ENCODE measurements at regions of chr11 and their contacts with region 1.

Region 1: DNA sequence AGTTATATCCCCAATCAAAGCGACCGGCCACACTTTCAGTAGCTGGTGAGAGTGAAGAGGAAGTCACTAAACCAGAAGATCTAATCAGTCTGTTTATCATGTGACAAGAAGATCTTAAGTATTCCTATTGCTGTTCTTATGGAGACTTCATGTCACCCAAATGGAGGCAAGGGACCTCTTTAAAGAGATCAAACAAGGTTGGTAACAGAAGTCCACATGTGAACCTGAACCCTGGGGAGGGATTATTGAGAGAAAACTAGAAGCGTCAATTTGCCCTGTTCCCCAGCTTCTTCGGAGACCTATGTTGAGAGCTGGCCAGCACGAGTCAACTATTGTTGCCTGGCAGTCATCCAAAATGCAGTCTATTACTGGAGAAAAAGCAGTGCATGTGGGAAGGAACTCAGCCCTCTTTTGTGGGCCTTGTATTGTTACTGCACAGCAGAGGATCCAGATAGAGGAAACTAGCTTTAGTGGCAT is 76.9 kb upstream of the CTSC start:
- DNase-seq: peak; percentile 75
- H3K4me3 ChIP-seq: no peak overlapping the region
- CTCF ChIP-seq: no peak

Region 2: GRCh38 chr11:88377144-88377543 is 37.3 kb before region 1 on chr11:
- in situ Hi-C with region 1: no loop called
- DNase-seq: no peak
- H3K4me3 ChIP-seq: no peak overlapping the region
- CTCF ChIP-seq: no peak

Region 3: DNA sequence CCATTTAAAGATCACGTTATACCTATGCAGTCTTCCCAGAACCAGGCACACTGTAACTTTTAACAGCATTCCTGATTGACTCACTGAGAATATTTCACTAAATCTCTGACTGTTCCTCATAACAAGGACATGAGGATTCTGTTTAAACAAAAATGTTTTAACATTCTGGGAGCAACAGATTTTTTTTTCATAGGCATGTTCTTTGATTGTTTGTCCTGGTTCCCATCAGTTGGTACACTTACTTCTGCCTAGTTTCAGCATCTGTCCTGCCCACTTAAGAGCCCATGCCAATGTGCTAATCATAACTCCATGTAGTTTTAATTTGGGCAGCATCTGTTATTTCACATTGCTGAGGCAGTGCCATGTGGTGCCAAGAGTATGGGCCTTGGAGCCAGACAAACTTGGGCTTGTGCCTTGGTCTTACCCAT is 61.6 kb after region 1 on chr11:
- in situ Hi-C with region 1: loop called (anchors 10 kb)
- DNase-seq: no peak
- H3K4me3 ChIP-seq: no peak overlapping the region
- CTCF ChIP-seq: no peak

Region 4: GRCh38 chr11:88515002-88515401 is 100.6 kb after region 1 on chr11:
- in situ Hi-C with region 1: no loop called
- DNase-seq: no peak
- H3K4me3 ChIP-seq: no peak overlapping the region
- CTCF ChIP-seq: no peak

Measured in astrocyte of the cerebellum (primary cell).